Heart left ventricle (tissue), 16 donors: ENCODE measurements at regions of chr4 and their contacts with region 1.

Region 1: GRCh38 chr4:158768555-158769174 is at the start of gene FNIP2:
- DNase-seq: peak; percentile 86 to 92 (median 90)
- ATAC-seq: peak; percentile 89 to 97 (median 94)
- H3K4me3 ChIP-seq: peak within 1 kb of the TSS; percentile 70 to 97 (median 92)
- H3K27ac ChIP-seq: peak within 1 kb of the TSS; percentile 83 to 95 (median 91)
- H3K4me1 ChIP-seq: peaks cover 7 to 58% (median 43%) of the 10 kb centered on the region in 12 donors
- H3K27me3 ChIP-seq: no peaks in the 10 kb centered on the region
- CTCF ChIP-seq: peak in 1 of 12 donors; percentile 6
- POLR2A ChIP-seq: peak in 1 of 2 donors; percentile 69
- total RNA-seq, gene FNIP2: 32.4 to 87.4 (median 44.7) TPM

Region 2: DNA sequence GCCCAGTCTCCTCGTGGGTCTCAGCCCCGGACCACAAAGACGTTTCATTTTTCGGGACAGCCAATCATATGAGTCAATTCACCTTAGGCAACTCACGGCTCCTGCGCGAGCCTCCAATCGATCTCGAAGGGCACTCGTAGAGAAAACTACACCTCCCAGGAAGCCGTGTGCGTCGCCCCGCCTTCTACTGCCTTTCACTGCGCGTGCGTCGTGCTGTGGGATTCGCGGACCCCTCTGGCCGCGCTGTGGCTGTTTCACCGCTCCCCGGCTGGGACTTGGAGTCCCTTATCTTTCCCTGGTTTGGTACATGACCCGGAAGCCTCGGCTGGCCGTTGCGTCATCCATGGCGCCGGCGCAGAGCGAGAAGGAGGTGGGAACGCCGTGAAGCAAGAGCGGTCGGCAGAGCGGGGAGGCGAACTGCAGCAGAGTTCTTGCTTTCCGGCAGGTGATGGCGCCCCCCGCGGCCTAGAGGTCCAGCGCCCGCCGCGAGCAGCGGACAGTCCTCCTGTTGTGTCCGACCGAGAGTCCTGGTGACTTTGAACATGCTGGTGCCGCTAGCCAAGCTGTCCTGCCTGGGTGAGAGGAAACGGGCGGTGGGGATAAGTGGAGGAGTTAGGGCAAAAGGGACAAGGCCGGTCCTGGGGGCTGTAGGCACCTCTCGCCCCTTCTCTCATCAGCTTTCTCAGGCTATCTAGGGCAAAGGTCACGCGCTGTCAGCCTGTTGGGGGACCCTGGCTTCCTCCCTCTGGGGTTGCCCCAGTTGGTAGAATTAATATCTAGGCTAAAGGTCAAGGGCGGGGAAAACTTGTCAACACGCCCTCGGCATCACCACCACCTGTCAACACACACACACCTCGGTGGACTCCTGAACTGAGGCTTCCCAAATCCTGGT is 96.5 kb before region 1 on chr4 and contains the start of gene ETFDH:
- intact Hi-C with region 1: loop called in 1 of 10 experiments (anchors 5 kb)
- DNase-seq: peak; percentile 99 to 100 (median 100)
- ATAC-seq: peak; percentile 92 to 96 (median 95)
- H3K4me3 ChIP-seq: peak within 1 kb of the TSS; percentile 61 to 91 (median 80)
- H3K27ac ChIP-seq: peak within 1 kb of the TSS; percentile 93 to 98 (median 96)
- H3K4me1 ChIP-seq: peaks cover 0 to 47% (median 20%) of the 10 kb centered on the region in 12 donors
- H3K27me3 ChIP-seq: no peaks in the 10 kb centered on the region
- CTCF ChIP-seq: peak; percentile 44 to 84 (median 62)
- POLR2A ChIP-seq: peak in 1 of 2 donors; percentile 87
- total RNA-seq, gene ETFDH: 116 to 289 (median 221) TPM

Region 3: DNA sequence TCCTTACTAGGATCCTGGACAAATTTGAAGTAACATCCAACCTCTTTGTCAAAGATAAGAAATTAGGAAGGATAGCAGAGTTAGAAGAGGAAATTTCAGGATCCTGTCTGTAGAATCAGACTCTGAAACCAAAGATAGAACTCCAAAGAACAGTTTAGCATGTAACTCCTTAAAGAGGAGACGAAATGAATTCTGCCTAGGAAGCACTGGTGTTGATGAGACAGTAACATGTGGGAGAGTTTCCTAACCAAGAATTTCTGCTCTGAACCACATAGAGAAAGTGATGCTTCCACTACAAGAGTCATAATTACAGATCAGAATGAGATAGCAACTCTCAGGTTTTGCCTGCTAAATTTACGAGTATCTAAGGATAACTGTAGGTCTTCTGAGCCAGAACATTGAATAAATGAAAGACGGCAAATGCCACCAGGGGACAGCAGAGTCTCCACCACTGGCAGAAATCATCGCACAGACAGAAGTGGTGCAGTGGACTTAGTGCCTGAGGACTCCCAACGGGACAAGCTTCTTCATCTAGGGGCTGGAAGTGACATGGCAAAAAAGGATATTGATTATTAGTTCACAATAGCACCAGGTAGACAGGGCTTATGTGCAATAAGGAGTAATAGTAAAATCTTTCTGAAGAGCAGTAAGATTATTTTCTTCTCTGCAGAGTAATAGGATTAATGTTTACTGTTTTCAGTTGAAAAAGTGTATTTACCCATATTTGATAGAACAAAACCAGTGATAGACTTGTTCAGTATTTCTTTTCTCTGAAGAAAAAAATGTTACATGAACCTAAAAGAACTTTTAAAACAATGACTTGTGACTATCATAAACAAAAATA is 38.7 kb before region 1 on chr4:
- intact Hi-C with region 1: loop called in 6 of 10 experiments (anchors 2 to 5 kb)
- DNase-seq: peak in 4 of 5 donors; percentile 66 to 75 (median 68)
- ATAC-seq: peak; percentile 88 to 97 (median 94)
- H3K4me3 ChIP-seq: no peak overlapping the region
- H3K27ac ChIP-seq: no peak overlapping the region
- H3K4me1 ChIP-seq: peaks cover 0 to 6% (median 0%) of the 10 kb centered on the region in 12 donors
- H3K27me3 ChIP-seq: no peaks in the 10 kb centered on the region
- CTCF ChIP-seq: peak; percentile 80 to 98 (median 90)
- POLR2A ChIP-seq: no peak

Region 4: DNA sequence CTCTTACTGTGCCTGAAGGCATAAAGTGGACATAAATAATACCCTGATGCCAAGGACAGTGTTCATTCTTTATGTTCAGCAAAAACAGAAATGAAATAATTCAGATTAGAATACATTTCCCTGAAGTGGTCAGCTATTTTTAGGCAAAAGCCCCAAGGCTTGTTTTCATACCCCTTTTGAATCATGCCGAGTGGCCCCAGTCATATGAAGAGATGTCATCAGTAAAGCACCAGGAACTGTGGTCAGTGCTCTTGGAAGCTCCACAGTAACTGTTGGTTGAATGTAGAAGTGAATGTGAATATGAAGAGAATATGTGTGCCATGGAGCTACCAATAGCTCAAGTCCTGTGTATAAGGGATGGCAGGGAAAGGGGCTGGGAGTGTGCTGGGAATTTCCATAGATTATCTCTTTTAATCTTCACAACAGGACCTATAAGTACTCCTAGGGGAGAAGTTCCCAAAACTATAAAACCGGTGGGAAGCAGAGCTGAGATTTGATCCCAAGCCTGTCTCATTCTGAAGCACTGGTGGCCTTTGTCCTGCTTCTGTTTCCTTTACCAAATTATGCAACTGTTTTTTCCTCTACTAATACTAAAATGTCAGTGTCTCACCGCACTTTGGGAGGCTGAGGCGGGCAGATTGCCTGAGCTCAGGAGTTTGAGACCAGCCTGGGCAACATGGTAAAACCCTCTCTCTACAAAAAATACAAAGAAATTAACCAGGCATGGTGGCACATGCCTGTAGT is 52.7 kb after region 1 on chr4:
- intact Hi-C with region 1: loop called in 5 of 10 experiments (anchors 5 to 10 kb)
- DNase-seq: no peak
- ATAC-seq: peak in 1 of 4 donors; percentile 25
- H3K4me3 ChIP-seq: no peak overlapping the region
- H3K27ac ChIP-seq: peak overlapping the region in 9 of 12 donors; percentile 10 to 77 (median 48)
- H3K4me1 ChIP-seq: peaks cover 13 to 96% (median 74%) of the 10 kb centered on the region in 12 donors
- H3K27me3 ChIP-seq: no peaks in the 10 kb centered on the region
- CTCF ChIP-seq: no peak
- POLR2A ChIP-seq: no peak

Region 5: GRCh38 chr4:158850800-158851644 is 82.4 kb after region 1 on chr4:
- intact Hi-C with region 1: loop called in 5 of 10 experiments (anchors 5 kb)
- DNase-seq: no peak
- ATAC-seq: no peak
- H3K4me3 ChIP-seq: no peak overlapping the region
- H3K27ac ChIP-seq: peak overlapping the region in 1 of 12 donors; percentile 1
- H3K4me1 ChIP-seq: peaks cover 0 to 40% (median 9%) of the 10 kb centered on the region in 12 donors
- H3K27me3 ChIP-seq: no peaks in the 10 kb centered on the region
- CTCF ChIP-seq: peak; percentile 56 to 84 (median 72)
- POLR2A ChIP-seq: no peak

Region 6: GRCh38 chr4:158906073-158906472 is 137.4 kb after region 1 on chr4:
- intact Hi-C with region 1: no loop called
- DNase-seq: no peak
- ATAC-seq: no peak
- H3K4me3 ChIP-seq: no peak overlapping the region
- H3K27ac ChIP-seq: no peak overlapping the region
- H3K4me1 ChIP-seq: peaks cover 0 to 21% (median 2%) of the 10 kb centered on the region in 12 donors
- H3K27me3 ChIP-seq: no peaks in the 10 kb centered on the region
- CTCF ChIP-seq: no peak
- POLR2A ChIP-seq: no peak